Transverse colon (tissue), 4 donors: ENCODE measurements at regions of chr14 and their contacts with region 1.

Region 1: DNA sequence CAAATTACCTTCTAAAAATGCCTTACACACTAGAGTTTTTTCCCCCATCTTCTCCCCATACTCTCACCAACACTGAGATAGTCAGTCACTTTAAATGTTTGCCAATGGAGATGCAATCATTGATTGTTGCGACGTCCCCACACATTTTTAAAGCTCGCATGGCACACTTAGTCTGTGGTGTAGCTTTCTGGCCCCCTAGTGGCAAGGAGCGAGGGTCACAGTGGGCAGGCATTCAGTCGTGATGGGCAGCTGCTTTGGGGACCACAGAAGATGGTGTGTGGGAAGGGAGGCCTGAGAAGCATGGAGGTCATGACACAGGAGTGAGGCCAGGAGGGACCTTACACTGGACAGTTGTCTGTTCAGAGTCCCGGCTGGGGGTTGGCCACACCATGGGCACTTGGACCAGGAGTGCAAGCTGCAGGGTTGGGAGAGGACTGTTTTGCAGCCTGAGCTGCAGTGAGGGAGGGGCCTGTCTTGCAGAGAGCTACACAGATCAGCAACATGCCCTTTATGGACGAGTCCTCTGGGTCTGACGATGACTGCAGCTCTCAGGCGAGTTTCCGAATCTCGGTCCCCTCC is 28.7 kb downstream of the PIGH start:
- DNase-seq: peak; percentile 70
- H3K4me3 ChIP-seq: no peak overlapping the region
- H3K27ac ChIP-seq: no peak overlapping the region
- H3K4me1 ChIP-seq: no peaks in the 10 kb centered on the region
- H3K27me3 ChIP-seq: no peaks in the 10 kb centered on the region
- CTCF ChIP-seq: peak; percentile 75 to 86 (median 83)
- EP300 ChIP-seq: no peak
- POLR2A ChIP-seq: no peak

Region 2: GRCh38 chr14:67420102-67420830 is 151.1 kb before region 1 on chr14:
- in situ Hi-C with region 1: loop called in 3 of 4 experiments (anchors 5 to 25 kb)
- intact Hi-C with region 1: loop called (anchors 5 kb)
- DNase-seq: peak; percentile 51
- H3K4me3 ChIP-seq: no peak overlapping the region
- H3K27ac ChIP-seq: peak overlapping the region in 2 of 4 donors; percentile 60 to 69
- H3K4me1 ChIP-seq: peaks cover 0 to 10% (median 7%) of the 10 kb centered on the region in 4 donors
- H3K27me3 ChIP-seq: peaks cover 5% of the 10 kb centered on the region
- CTCF ChIP-seq: peak; percentile 31 to 66 (median 54)
- EP300 ChIP-seq: no peak
- POLR2A ChIP-seq: no peak

Region 3: DNA sequence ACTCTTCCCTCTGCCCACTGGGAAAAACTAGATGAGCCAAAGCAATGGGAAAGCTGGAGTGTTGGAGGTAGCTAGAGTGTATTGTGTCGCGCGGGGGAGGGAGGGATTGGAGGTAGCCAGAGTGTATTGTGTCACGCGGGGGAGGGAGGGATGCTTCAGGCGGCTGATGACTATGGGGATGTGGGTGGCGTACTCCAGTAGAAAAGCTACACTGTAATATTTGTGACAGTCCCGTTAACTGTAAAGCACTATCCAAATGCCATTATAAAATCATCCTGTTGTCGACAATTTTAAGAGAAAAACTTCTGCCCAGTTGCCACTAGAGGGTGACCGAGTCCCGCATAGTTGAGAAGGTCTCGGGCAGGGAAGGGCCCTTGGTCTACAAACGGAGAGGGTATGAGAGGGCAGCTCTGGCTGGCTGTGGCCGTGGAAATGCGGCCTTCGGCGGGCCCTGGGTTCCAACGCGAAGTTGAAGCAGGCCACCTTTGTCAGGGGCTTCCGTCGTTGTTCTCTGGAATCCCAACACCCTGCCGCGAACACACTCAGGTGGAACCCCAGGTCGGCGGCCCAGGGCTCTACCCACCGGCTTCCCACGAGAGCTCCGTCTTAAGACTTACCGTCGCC is 144.3 kb before region 1 on chr14:
- in situ Hi-C with region 1: loop called in 3 of 4 experiments (anchors 5 to 25 kb)
- intact Hi-C with region 1: loop called (anchors 5 kb)
- DNase-seq: peak; percentile 82
- H3K4me3 ChIP-seq: no peak overlapping the region
- H3K27ac ChIP-seq: no peak overlapping the region
- H3K4me1 ChIP-seq: peaks cover 5 to 15% (median 12%) of the 10 kb centered on the region in 4 donors
- H3K27me3 ChIP-seq: peaks cover 12% of the 10 kb centered on the region
- CTCF ChIP-seq: peak; percentile 79 to 90 (median 80)
- EP300 ChIP-seq: no peak
- POLR2A ChIP-seq: no peak

Region 4: GRCh38 chr14:67467179-67468080 is 103.9 kb before region 1 on chr14:
- in situ Hi-C with region 1: loop called in 1 of 4 experiments (anchors 25 kb)
- intact Hi-C with region 1: no loop called
- DNase-seq: no peak
- H3K4me3 ChIP-seq: no peak overlapping the region
- H3K27ac ChIP-seq: peak overlapping the region in 3 of 4 donors; percentile 37 to 51 (median 42)
- H3K4me1 ChIP-seq: peaks cover 0 to 14% (median 5%) of the 10 kb centered on the region in 4 donors
- H3K27me3 ChIP-seq: no peaks in the 10 kb centered on the region
- CTCF ChIP-seq: peak in 4 of 5 experiments; percentile 2 to 29 (median 20)
- EP300 ChIP-seq: no peak
- POLR2A ChIP-seq: no peak

Region 5: GRCh38 chr14:67526676-67527459 is 44.5 kb before region 1 on chr14:
- in situ Hi-C with region 1: no loop called
- intact Hi-C with region 1: loop called (anchors 5 kb)
- DNase-seq: peak; percentile 49
- H3K4me3 ChIP-seq: no peak overlapping the region
- H3K27ac ChIP-seq: no peak overlapping the region
- H3K4me1 ChIP-seq: peaks cover 0 to 12% (median 10%) of the 10 kb centered on the region in 4 donors
- H3K27me3 ChIP-seq: peaks cover 11% of the 10 kb centered on the region
- CTCF ChIP-seq: peak; percentile 54 to 89 (median 60)
- EP300 ChIP-seq: no peak
- POLR2A ChIP-seq: no peak